ENCODE measurements at regions of chr7 and their contacts with region 1.

Region 1: GRCh38 chr7:94382132-94382531 is 12.6 kb upstream of the COL1A2 start:
- DNase-seq: no peak
- H3K4me3 ChIP-seq: no peak overlapping the region
- H3K27ac ChIP-seq: no peak overlapping the region
- H3K4me1 ChIP-seq: no peaks in the 10 kb centered on the region
- H3K27me3 ChIP-seq: no peaks in the 10 kb centered on the region
- CTCF ChIP-seq: no peak

Region 2: DNA sequence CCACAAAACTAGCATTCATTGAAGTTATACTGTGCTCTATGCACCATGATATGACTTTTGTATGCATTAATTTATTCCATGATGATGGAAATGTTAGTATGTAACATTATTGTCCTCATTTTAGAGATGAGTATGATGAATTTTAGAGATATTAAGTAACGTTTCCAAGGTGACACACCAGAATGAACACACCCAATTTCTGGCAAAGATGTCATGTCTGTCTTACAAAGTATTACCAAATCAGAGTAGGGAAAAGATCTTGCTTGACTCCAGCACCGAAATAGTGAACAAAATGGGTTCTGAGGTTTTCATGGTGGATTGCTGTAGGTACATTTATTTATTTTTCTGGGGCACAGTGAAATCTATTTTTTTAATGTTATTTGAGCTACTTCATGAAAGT is 21.2 kb before region 1 on chr7:
- CTCF ChIA-PET with region 1: no interaction called
- POLR2A ChIA-PET with region 1: no interaction called
- intact Hi-C with region 1: loop called (anchors 1 kb)
- DNase-seq: no peak
- H3K4me3 ChIP-seq: no peak overlapping the region
- H3K27ac ChIP-seq: no peak overlapping the region
- H3K4me1 ChIP-seq: no peaks in the 10 kb centered on the region
- H3K27me3 ChIP-seq: no peaks in the 10 kb centered on the region
- CTCF ChIP-seq: no peak